Activated CD4-positive, alpha-beta T cell treated with anti-CD3 and anti-CD28 coated beads for 36 hours (primary cell): ENCODE measurements at regions of chr9 and their contacts with region 1.

Region 1: DNA sequence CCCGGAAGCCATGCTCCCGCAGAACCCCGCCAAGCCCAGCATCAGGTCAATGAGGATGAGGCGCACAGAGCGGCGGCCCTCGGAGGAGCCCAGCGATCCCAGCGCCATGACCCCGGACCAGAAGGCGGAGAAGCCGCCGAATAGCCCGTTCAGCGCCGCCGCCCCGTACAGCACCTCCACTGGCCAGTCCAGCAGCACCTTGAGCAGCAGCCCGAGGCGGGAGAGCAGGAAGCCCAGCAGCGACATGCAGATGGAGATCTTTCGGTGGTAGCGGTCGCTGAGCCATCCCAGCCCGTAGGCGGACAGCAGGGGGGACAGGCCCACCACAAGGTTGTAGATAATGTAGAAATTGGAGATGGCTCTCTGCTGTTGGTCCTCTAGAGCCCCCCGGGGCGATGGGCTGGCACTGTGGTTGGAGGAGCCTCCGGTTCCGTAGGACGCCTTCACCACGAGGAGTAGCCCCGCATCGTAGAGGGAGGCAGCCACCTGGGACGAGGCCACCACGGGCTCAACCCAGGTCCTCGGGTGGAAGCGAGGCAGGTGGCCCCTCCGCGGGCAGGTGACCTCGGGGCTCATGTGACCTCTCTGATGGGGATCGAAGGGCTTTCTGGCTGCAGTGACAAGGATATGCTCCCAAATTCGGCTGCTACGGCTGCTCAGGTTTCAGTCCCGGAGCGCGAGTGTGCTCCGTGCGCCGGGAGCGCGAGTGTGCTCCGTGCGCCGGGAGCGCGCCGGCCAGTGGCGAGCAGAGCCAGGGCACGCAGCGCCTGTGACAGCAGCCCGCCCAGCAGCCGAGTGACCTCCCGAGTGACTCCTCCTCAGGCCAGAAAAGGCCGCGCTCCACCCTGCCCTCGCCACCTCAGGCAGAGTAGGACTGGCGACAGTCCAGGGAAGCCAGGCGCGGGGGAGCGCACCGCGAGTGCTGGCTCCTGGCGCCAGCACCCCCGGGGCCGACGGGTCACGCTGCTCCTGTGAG is at the start of gene SLC46A2:
- DNase-seq: no peak
- ATAC-seq: no peak
- H3K4me3 Mint-ChIP-seq: no peak within 1 kb of the TSS
- H3K27ac Mint-ChIP-seq: no peak within 1 kb of the TSS
- H3K4me1 Mint-ChIP-seq: no peaks in the 10 kb centered on the region
- H3K27me3 Mint-ChIP-seq: peaks cover 33% of the 10 kb centered on the region
- total RNA-seq, gene SLC46A2: not detected

Region 2: DNA sequence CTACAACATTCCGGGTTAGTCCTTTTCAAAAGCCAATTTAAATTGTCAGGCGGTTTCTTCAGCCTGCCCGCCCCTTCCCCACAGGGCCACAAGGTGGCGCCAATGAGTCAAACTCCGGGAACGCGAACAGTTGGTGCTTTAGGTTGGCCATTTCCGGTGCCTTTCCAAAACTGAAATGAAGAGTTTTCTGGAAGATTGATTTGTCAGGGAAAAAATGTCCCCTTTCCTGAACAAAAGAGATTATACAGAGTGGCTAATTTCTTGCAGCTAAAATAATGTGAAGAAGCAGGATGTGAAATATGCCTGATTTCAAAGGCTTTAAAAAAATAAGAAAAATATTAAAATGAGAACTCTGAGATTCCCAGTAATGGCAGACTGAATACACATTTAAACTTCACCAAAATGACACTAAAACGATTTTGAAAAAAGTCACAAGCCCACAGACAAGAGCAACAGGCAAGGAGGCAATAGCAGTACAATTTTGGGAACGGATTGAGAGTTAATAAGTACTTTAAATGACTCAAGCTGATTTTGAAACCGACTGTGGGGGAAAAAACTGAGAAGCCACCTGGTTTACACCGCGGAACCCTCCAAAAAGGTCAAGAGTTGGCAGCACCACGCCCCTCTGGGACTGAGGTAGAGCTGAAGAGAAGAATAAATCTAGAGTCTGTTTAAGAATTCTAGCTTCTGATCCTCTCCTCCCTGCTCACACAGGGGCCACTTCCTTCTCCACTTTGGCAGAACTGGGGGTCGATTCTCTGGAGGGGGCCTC is 45.4 kb before region 1 on chr9:
- CTCF ChIA-PET with region 1: no interaction called
- POLR2A ChIA-PET with region 1: no interaction called
- intact Hi-C with region 1: loop called in 1 of 2 experiments (anchors 5 kb)
- DNase-seq: peak; percentile 88
- ATAC-seq: peak; percentile 74
- H3K4me3 Mint-ChIP-seq: no peak overlapping the region
- H3K27ac Mint-ChIP-seq: no peak overlapping the region
- H3K4me1 Mint-ChIP-seq: peaks cover 18% of the 10 kb centered on the region
- H3K27me3 Mint-ChIP-seq: no peaks in the 10 kb centered on the region